OCI-LY7 (cell line): ENCODE measurements at regions of chr5 and their contacts with region 1.

Region 1: DNA sequence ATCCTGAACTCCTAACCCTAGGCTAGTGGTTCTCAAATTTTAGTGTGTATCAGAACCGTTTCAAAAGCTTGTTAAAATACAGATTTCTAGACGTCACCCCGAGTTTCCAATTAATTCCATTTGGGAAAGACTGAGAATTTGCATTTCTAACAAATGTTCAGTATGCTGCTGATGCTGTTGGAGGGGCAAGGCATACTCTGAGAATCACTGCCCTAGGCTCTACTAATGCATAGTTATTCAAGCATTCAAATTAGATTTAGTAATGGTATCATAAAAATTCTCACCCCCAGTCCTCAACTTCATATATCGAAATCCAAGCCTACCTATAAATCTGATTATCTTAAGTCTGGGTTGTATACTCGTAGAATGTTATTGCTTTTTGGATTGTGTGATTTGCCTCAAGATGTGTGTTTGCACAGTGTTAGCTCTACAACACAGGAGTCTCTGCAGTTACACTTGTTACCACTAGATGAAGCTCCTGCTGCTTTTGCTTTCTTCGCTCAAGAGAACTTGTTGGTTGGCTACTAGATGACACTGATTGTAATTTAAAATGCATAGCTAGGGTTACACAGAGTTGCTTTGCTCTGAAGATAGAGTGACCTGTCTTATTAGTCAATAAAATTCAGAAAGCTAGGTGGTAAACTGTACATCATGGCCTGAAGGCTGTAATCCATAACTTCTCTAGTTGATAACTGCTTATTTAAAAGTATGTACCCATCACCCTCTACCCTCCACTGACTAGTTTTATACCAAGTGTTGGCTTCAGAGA is 7.5 kb upstream of the ERAP2 start:
- DNase-seq: peak; percentile 90
- H3K4me3 ChIP-seq: no peak overlapping the region
- H3K27ac ChIP-seq: no peak overlapping the region
- H3K4me1 ChIP-seq: peaks cover 47% of the 10 kb centered on the region
- CTCF ChIP-seq: peak; percentile 100

Region 2: GRCh38 chr5:96752341-96753016 is 116.3 kb before region 1 on chr5:
- CTCF ChIA-PET with region 1: no interaction called
- POLR2A ChIA-PET with region 1: interaction called, 3 read pairs
- intact Hi-C with region 1: loop called (anchors 2 kb)
- DNase-seq: peak; percentile 82
- H3K4me3 ChIP-seq: no peak overlapping the region
- H3K27ac ChIP-seq: no peak overlapping the region
- H3K4me1 ChIP-seq: no peaks in the 10 kb centered on the region
- CTCF ChIP-seq: peak; percentile 91

Region 3: DNA sequence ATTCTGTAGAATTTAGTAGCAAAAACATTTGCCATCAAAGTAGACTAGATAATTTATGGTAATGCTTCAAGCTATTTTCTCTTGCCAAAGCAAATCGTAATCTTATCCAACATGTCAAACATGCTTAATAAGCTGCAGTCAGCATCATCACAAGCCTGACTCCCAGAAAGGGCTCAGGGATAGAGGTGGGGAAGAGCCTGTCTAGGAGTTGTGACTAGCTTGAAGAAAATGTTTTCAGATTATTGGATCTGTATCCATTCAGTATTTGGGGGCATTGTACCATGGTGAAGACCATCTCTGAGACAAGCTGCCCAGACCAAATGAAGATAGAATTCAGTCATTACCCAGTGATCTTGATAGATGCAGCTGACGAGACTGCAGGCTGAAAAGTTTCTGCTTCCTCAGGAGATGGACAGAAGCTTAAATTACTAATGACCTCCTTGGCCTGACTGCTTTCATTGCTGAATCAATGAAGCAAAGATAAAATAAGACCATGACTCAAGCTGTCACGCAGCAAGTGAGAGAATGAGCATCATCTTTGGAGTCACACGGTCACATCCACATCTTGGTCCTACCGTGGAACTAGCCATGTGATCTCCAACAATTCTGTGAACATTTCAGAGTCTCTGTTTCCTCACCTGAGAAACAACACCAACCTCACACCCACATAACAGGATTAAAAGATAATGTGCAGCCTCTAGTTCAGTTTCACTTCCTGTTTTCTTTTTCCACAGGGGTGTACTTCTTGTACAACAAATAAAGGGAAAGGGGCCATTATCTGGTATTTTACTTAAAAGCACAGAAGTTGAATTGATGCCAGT is 16.9 kb after region 1 on chr5:
- CTCF ChIA-PET with region 1: interaction called, 5 read pairs
- POLR2A ChIA-PET with region 1: interaction called, 15 read pairs
- intact Hi-C with region 1: no loop called
- DNase-seq: peak; percentile 84
- H3K4me3 ChIP-seq: peak overlapping the region; percentile 42
- H3K27ac ChIP-seq: peak overlapping the region; percentile 67
- H3K4me1 ChIP-seq: peaks cover 39% of the 10 kb centered on the region
- CTCF ChIP-seq: no peak

Region 4: DNA sequence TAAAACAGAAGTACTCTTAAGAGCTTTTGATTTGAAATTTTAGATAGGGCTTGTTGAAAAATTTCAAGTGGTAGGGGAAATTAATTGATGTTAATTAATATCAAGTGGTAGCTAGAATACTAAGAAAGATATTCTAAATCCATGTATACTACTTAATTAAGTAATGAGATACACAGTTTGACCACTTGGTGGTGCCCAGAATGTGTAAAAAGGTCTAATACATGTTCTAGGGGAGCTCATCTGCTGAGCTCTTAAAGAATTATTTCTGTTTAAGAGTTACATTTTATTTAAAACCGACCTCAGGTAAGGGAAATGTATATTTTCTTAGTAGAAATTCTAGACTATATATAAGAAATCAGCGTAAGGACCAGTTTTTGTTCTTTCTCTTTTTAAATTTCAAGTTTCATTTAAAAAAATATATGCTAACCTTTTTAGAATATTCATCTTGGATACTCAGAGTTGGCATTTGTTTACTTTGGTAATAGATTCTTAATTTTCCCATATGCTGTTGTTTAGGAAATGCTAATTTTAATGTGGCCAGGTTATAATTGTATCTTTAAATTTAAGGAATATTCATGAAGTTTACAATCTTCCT is 128.6 kb after region 1 on chr5:
- CTCF ChIA-PET with region 1: interaction called, 3 read pairs
- POLR2A ChIA-PET with region 1: interaction called, 6 read pairs
- intact Hi-C with region 1: loop called (anchors 1 kb)
- DNase-seq: peak; percentile 70
- H3K4me3 ChIP-seq: no peak overlapping the region
- H3K27ac ChIP-seq: no peak overlapping the region
- H3K4me1 ChIP-seq: no peaks in the 10 kb centered on the region
- CTCF ChIP-seq: peak; percentile 92

Region 5: GRCh38 chr5:97075649-97076048 is 206.9 kb after region 1 on chr5:
- CTCF ChIA-PET with region 1: no interaction called
- POLR2A ChIA-PET with region 1: no interaction called
- intact Hi-C with region 1: no loop called
- DNase-seq: no peak
- H3K4me3 ChIP-seq: no peak overlapping the region
- H3K27ac ChIP-seq: no peak overlapping the region
- H3K4me1 ChIP-seq: no peaks in the 10 kb centered on the region
- CTCF ChIP-seq: no peak

Region 6: GRCh38 chr5:97142521-97143254 is 273.9 kb after region 1 on chr5 and contains the start of gene LIX1:
- CTCF ChIA-PET with region 1: interaction called, 22 read pairs
- POLR2A ChIA-PET with region 1: interaction called, 13 read pairs
- intact Hi-C with region 1: loop called (anchors 1 kb)
- DNase-seq: peak; percentile 75
- H3K4me3 ChIP-seq: no peak within 1 kb of the TSS
- H3K27ac ChIP-seq: no peak within 1 kb of the TSS
- H3K4me1 ChIP-seq: peaks cover 5% of the 10 kb centered on the region
- CTCF ChIP-seq: peak; percentile 87
- total RNA-seq, gene LIX1: 0.18 and 0.44 TPM in 2 replicates

Region 7: GRCh38 chr5:97355775-97356174 is 487.0 kb after region 1 on chr5:
- CTCF ChIA-PET with region 1: no interaction called
- POLR2A ChIA-PET with region 1: no interaction called
- intact Hi-C with region 1: no loop called
- DNase-seq: no peak
- H3K4me3 ChIP-seq: no peak overlapping the region
- H3K27ac ChIP-seq: no peak overlapping the region
- H3K4me1 ChIP-seq: no peaks in the 10 kb centered on the region
- CTCF ChIP-seq: no peak